ENCODE measurements at regions of chr14 and their contacts with region 1.

Region 1: GRCh38 chr14:21978184-21978998 is 304.8 kb upstream of the OR4E1 start:
- DNase-seq: peak; percentile 16
- H3K4me3 ChIP-seq: no peak overlapping the region
- H3K27ac ChIP-seq: no peak overlapping the region
- H3K4me1 ChIP-seq: no peaks in the 10 kb centered on the region
- H3K27me3 ChIP-seq: no peaks in the 10 kb centered on the region
- CTCF ChIP-seq: peak; percentile 89 to 94

Region 2: DNA sequence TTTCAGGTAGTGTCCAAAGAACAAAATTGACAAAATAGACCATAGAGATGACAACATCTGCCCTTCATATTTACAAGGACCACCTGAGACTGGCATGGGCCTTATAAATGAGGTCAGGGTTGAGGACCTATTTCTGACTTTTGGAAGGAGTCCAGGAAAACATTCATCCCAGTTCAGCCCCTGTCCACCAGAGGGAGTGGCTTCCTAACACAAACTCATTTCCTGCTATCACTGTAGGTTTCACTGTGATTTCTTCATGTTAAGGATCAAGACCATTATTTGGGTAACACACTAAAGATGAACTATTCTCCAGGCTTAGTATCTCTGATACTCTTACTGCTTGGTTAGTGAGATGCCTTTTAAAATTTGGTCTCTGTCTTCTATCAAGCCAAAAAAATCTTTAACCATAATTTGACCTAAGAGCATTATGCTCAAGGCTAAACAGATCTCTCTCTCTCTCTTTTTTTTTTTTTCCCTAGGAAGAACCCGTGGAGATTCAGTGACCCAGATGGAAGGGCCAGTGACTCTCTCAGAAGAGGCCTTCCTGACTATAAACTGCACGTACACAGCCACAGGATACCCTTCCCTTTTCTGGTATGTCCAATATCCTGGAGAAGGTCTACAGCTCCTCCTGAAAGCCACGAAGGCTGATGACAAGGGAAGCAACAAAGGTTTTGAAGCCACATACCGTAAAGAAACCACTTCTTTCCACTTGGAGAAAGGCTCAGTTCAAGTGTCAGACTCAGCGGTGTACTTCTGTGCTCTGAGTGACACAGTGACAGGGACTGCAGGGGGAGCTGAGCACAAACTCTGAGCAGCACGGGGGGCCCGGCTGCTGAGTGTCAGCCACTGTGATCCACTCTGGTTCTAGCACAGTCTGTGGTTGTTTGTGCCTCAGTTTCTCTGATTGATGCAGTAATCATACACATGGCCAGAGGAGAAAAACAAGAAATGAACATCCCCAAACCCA is 37.2 kb before region 1 on chr14:
- CTCF ChIA-PET with region 1: no interaction called
- dilution Hi-C with region 1: no loop called
- in situ Hi-C with region 1: no loop called
- intact Hi-C with region 1: loop called (anchors 5 kb)
- DNase-seq: peak; percentile 14
- H3K4me3 ChIP-seq: no peak overlapping the region
- H3K27ac ChIP-seq: no peak overlapping the region
- H3K4me1 ChIP-seq: no peaks in the 10 kb centered on the region
- H3K27me3 ChIP-seq: no peaks in the 10 kb centered on the region
- CTCF ChIP-seq: peak; percentile 68 to 73

Region 3: DNA sequence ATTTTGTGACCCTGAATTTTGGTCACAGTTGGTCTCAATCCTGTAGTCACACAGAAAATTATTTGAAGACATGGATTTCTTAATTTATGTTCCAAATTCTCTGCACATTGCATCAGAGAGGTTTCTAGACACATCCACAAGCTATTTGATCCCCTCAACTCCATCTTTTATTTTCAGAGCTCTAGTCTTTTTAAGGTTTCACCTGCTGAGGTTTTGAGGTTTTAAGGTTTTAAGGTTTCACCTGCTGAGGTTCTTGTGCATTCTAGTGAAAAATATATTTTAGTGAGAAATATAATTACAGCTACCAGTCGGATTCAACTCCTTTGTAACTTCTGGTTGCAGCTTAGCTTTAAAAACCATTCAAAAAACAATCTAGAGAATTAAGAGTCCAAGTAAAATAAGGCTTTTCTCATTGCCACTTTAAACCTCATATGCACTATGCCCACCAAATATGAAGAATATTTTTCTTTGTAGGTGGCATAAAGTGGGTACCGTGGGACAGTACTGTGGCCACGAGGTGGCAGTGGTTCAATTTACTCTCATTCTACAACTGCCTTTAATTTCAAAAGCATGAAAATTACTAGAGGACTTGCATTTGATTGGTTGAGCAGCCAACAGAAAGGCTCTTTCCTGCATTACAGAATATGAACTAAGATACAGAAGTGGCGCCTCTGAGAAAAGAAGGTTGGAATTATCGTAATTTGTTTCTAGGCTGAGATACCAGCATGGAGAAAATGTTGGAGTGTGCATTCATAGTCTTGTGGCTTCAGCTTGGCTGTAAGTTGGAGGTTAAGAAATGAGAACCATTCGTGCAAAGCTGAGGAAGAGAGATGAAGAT is 61.8 kb after region 1 on chr14:
- CTCF ChIA-PET with region 1: no interaction called
- dilution Hi-C with region 1: loop called (anchors 5 kb)
- in situ Hi-C with region 1: no loop called
- intact Hi-C with region 1: no loop called
- DNase-seq: peak; percentile 4
- H3K4me3 ChIP-seq: no peak overlapping the region
- H3K27ac ChIP-seq: no peak overlapping the region
- H3K4me1 ChIP-seq: no peaks in the 10 kb centered on the region
- H3K27me3 ChIP-seq: no peaks in the 10 kb centered on the region
- CTCF ChIP-seq: peak; percentile 47 to 59

Region 4: GRCh38 chr14:22122227-22122818 is 143.9 kb after region 1 on chr14:
- CTCF ChIA-PET with region 1: no interaction called
- dilution Hi-C with region 1: no loop called
- in situ Hi-C with region 1: no loop called
- intact Hi-C with region 1: no loop called
- DNase-seq: peak; percentile 24
- H3K4me3 ChIP-seq: no peak overlapping the region
- H3K27ac ChIP-seq: no peak overlapping the region
- H3K4me1 ChIP-seq: peaks cover 6% of the 10 kb centered on the region
- H3K27me3 ChIP-seq: peaks cover 2% of the 10 kb centered on the region
- CTCF ChIP-seq: peak; percentile 29 to 53